Adrenal gland (tissue), 19 donors: ENCODE measurements at regions of chr1 and their contacts with region 1.

Region 1: GRCh38 chr1:179081687-179082332 is at the start of gene TOR3A:
- DNase-seq: peak; percentile 92 to 96 (median 94)
- H3K4me3 ChIP-seq: peak within 1 kb of the TSS; percentile 43 to 94 (median 83)
- H3K27ac ChIP-seq: peak within 1 kb of the TSS; percentile 34 to 93 (median 67)
- H3K4me1 ChIP-seq: peaks cover 6 to 17% of the 10 kb centered on the region in 2 donors
- H3K27me3 ChIP-seq: no peaks in the 10 kb centered on the region
- CTCF ChIP-seq: peak in 1 of 6 experiments; percentile 4
- POLR2A ChIP-seq: peak; percentile 64 to 89
- total RNA-seq, gene TOR3A: 12.6 to 53.5 (median 24.7) TPM

Region 2: GRCh38 chr1:179190861-179191260 is 109.1 kb after region 1 on chr1:
- intact Hi-C with region 1: loop called in 1 of 2 experiments (anchors 5 kb)
- DNase-seq: peak in 1 of 7 donors; percentile 32
- H3K4me3 ChIP-seq: no peak overlapping the region
- H3K27ac ChIP-seq: peak overlapping the region in 1 of 5 donors; percentile 1
- H3K4me1 ChIP-seq: no peaks in the 10 kb centered on the region
- H3K27me3 ChIP-seq: no peaks in the 10 kb centered on the region
- CTCF ChIP-seq: no peak
- POLR2A ChIP-seq: no peak

Region 3: GRCh38 chr1:179293340-179294327 is 211.8 kb after region 1 on chr1 and contains the start of gene SOAT1:
- intact Hi-C with region 1: loop called in 1 of 2 experiments (anchors 5 kb)
- DNase-seq: peak; percentile 97 to 98 (median 98)
- H3K4me3 ChIP-seq: peak within 1 kb of the TSS; percentile 51 to 97 (median 80)
- H3K27ac ChIP-seq: peak within 1 kb of the TSS; percentile 86 to 97 (median 94)
- H3K4me1 ChIP-seq: peaks cover 12 to 36% of the 10 kb centered on the region in 2 donors
- H3K27me3 ChIP-seq: no peaks in the 10 kb centered on the region
- CTCF ChIP-seq: peak in 1 of 6 experiments; percentile 27
- POLR2A ChIP-seq: peak; percentile 86 to 98
- total RNA-seq, gene SOAT1: 127 to 803 (median 291) TPM